ENCODE measurements at regions of chr5 and their contacts with region 1.

Region 1: GRCh38 chr5:141691867-141692532 is 10.0 kb upstream of the ARAP3 start:
- H3K4me3 ChIP-seq: peak overlapping the region; percentile 2; the same call in 1 of the 2 replicates
- H3K27ac ChIP-seq: no peak overlapping the region
- H3K4me1 ChIP-seq: no peaks in the 10 kb centered on the region
- CTCF ChIP-seq: peak; percentile 99

Region 2: GRCh38 chr5:141664732-141665461 is 27.1 kb before region 1 on chr5:
- CTCF ChIA-PET with region 1: interaction called, 19 read pairs
- POLR2A ChIA-PET with region 1: no interaction called
- H3K4me3 ChIP-seq: no peak overlapping the region
- H3K27ac ChIP-seq: no peak overlapping the region
- H3K4me1 ChIP-seq: no peaks in the 10 kb centered on the region
- CTCF ChIP-seq: peak; percentile 42

Region 3: DNA sequence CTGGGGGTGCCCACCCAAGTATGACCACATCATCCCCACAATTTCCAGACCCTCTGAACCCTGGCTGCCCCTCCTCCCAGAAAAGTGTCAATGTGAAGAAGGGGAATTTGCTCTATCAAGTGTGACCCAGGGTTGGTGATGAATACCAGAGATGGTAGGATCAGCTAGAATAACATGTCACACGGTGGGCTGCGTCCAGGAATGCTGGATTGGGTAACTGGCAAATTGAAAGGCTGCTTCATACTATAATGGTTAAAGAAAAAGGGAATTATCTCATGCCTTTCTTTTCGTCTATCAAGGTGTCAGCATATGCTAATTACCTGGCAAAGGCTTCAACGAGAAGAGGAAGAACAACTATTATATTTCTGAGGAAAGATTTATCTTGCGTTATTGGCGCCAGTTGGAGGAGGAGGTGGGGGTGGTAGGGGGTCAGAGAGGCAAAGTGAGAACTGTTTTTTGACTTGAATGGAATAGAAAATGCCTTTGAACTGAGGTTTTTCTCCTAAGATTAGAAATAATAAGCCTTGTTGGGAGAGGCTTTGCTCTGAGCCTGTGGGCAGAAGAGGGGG is 17.8 kb after region 1 on chr5:
- CTCF ChIA-PET with region 1: interaction called, 17 read pairs
- POLR2A ChIA-PET with region 1: no interaction called
- H3K4me3 ChIP-seq: no peak overlapping the region
- H3K27ac ChIP-seq: no peak overlapping the region
- H3K4me1 ChIP-seq: 0 out of 2 replicates have a peak, but pooled peaks cover 2% of the 10 kb centered on the region
- CTCF ChIP-seq: no peak

Region 4: GRCh38 chr5:141825791-141826560 is 134.0 kb after region 1 on chr5:
- CTCF ChIA-PET with region 1: interaction called, 11 read pairs
- POLR2A ChIA-PET with region 1: no interaction called
- H3K4me3 ChIP-seq: no peak overlapping the region
- H3K27ac ChIP-seq: no peak overlapping the region
- H3K4me1 ChIP-seq: no peaks in the 10 kb centered on the region
- CTCF ChIP-seq: 0 out of 2 replicates have a peak, but pooled peaks have one; percentile 27

Region 5: GRCh38 chr5:141960449-141961202 is 268.6 kb after region 1 on chr5:
- CTCF ChIA-PET with region 1: interaction called, 158 read pairs
- POLR2A ChIA-PET with region 1: interaction called, 4 read pairs
- H3K4me3 ChIP-seq: no peak overlapping the region
- H3K27ac ChIP-seq: no peak overlapping the region
- H3K4me1 ChIP-seq: no peaks in the 10 kb centered on the region
- CTCF ChIP-seq: peak; percentile 87

Region 6: GRCh38 chr5:141976176-141976575 is 284.2 kb after region 1 on chr5:
- CTCF ChIA-PET with region 1: interaction called, 12 read pairs
- POLR2A ChIA-PET with region 1: no interaction called
- H3K4me3 ChIP-seq: no peak overlapping the region
- H3K27ac ChIP-seq: no peak overlapping the region
- H3K4me1 ChIP-seq: no peaks in the 10 kb centered on the region; the same call in 1 of the 2 replicates
- CTCF ChIP-seq: no peak

Region 7: DNA sequence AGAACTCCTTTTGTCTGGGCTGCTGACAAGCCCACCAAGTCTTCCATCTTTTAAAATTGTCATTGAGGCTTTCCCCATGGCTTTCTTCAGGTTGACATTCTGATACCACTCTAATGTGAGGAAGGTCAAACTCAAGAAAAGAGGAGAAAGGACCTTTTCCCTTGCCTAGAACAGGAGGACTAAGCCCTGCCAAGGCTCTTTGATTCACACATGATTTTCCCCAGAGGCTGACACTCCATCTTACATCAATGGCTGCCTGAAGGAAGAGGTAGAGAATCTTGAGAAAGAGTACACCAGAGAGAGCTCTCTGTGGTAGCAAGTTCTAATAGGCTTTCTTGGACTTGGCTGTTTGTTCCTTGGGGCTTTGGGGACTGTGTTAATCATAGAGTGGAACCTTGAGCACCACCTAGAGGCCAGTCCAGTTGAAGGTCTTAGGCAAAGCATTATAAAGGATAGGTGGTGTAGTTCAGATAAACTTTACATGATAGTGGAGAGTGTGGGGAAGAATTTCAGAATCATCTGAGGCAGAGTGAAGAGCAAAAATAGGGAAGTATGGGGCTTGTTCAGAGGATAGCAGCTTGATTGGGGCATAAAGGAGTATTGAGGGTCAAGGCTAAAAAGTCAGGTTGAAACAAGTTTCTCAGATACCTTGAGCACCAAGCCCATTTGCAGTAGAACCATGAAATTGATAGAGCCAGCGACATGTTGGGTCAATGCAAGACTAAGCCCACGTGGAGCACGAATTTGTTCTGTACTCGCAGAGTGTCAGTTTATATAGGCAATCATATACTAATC is 453.3 kb after region 1 on chr5:
- CTCF ChIA-PET with region 1: interaction called, 17 read pairs
- POLR2A ChIA-PET with region 1: no interaction called
- H3K4me3 ChIP-seq: no peak overlapping the region
- H3K27ac ChIP-seq: no peak overlapping the region
- H3K4me1 ChIP-seq: no peaks in the 10 kb centered on the region
- CTCF ChIP-seq: no peak

Region 8: GRCh38 chr5:142529626-142530278 is 837.8 kb after region 1 on chr5:
- CTCF ChIA-PET with region 1: no interaction called
- POLR2A ChIA-PET with region 1: no interaction called
- H3K4me3 ChIP-seq: no peak overlapping the region
- H3K27ac ChIP-seq: no peak overlapping the region
- H3K4me1 ChIP-seq: no peaks in the 10 kb centered on the region
- CTCF ChIP-seq: no peak

Measured in HEK293 (cell line).